ENCODE measurements at regions of chr3 and their contacts with region 1.

Region 1: DNA sequence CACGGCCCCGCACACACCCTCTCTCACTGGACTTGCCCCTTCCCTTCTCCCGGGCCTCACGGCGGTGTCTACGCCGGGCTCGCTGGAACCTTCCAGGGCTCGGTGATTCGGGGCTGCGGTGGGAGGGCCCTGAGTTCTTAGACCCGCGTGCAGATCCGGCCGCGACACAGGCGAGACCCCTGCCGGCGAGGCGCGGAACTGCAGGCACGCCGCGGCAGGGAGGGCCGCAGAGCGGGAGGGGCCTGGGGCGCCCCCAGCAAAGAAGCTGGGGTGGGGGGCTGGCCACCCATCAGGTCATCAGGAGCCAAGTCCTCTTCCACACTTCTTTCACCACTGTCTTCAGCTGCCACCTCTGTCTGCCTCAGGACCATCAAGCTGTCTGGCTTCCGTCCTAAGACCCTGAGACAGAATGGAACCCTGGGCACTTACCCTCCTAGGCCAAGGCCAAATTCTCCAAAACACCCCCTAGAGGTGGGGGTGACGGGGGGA is 164.5 kb downstream of the XXYLT1 start:
- DNase-seq: no peak
- ATAC-seq: peak; percentile 89
- H3K4me3 ChIP-seq: peak overlapping the region in 1 of 2 experiments; percentile 25; a peak in 1 of 4 replicates
- H3K27ac ChIP-seq: no peak overlapping the region
- H3K4me1 ChIP-seq: peaks cover 10 to 38% of the 10 kb centered on the region in 2 experiments
- H3K27me3 ChIP-seq: no peaks in the 10 kb centered on the region
- CTCF ChIP-seq: peak; percentile 87 to 97 (median 93)
- POLR2A ChIP-seq: no peak
- RAD21 ChIP-seq: peak; percentile 96

Region 2: GRCh38 chr3:194671900-194672808 is 434.3 kb before region 1 on chr3 and contains the start of gene LSG1:
- CTCF ChIA-PET with region 1: interaction called, 10 read pairs
- POLR2A ChIA-PET with region 1: no interaction called
- RAD21 ChIA-PET with region 1: no interaction called
- intact Hi-C with region 1: loop called (anchors 1 kb)
- DNase-seq: peak; percentile 95
- ATAC-seq: peak; percentile 93
- H3K4me3 ChIP-seq: peak within 1 kb of the TSS; percentile 89 to 95
- H3K27ac ChIP-seq: peak within 1 kb of the TSS; percentile 43
- H3K4me1 ChIP-seq: peaks cover 7 to 19% of the 10 kb centered on the region in 2 experiments; a peak in 3 of 4 replicates
- H3K27me3 ChIP-seq: no peaks in the 10 kb centered on the region; the same call in 1 of the 2 replicates
- CTCF ChIP-seq: no peak
- POLR2A ChIP-seq: peak; percentile 26
- RAD21 ChIP-seq: no peak
- total RNA-seq, gene LSG1: 39.7 TPM

Region 3: GRCh38 chr3:194871143-194871863 is 235.2 kb before region 1 on chr3:
- CTCF ChIA-PET with region 1: no interaction called
- POLR2A ChIA-PET with region 1: no interaction called
- RAD21 ChIA-PET with region 1: no interaction called
- intact Hi-C with region 1: loop called (anchors 10 kb)
- DNase-seq: peak; percentile 60
- ATAC-seq: peak; percentile 83
- H3K4me3 ChIP-seq: peak overlapping the region; percentile 13 to 42; a peak in 3 of 4 replicates
- H3K27ac ChIP-seq: peak overlapping the region; percentile 36
- H3K4me1 ChIP-seq: peaks cover 37 to 41% of the 10 kb centered on the region in 2 experiments
- H3K27me3 ChIP-seq: no peaks in the 10 kb centered on the region
- CTCF ChIP-seq: no peak
- POLR2A ChIP-seq: no peak
- RAD21 ChIP-seq: peak; percentile 41; the same call in 1 of the 2 replicates

Region 4: DNA sequence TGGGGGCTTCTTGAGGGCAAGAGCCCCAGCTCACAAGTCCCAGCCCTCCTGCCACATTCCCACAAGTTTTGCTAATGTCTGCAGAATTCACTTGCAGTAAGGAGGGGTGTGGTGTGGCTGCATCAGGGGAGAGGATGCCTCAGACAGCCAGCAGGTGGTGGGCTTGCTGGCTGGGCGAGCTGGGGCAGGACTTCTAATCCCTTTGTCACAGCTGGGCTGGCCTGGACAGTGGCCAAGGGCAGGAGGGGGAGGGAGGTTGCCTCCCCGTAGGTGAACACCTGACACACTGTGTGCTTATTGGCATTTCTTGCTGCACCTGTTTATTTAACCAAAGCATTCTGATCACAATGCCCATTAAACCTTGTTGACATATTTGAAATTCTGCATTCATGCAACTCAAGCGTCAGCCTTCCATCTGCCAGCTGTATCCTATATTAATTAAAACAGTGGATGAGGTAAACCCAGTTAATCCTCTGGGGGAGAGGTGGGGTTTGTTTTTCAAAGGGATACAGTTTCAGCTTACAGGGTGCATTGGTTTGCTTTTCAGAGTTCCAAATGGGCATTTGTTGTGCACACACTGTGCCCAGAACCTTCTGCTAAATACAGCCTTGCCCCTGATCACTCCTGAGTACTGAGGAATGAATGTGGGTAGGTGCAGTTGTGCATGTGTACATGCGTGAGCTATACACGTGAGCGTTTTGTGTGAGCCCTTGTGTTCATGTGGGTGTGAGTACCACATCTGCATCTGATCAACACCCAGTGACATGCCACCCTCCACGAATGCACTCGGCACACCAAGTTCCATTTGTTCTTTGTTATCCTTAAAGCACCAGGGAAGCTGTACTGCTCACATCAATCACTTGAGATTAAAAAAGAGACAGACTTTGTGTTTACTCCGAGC is 104.3 kb before region 1 on chr3:
- CTCF ChIA-PET with region 1: interaction called, 4 read pairs
- POLR2A ChIA-PET with region 1: no interaction called
- RAD21 ChIA-PET with region 1: no interaction called
- intact Hi-C with region 1: loop called (anchors 1 kb)
- DNase-seq: peak; percentile 37
- ATAC-seq: peak; percentile 93
- H3K4me3 ChIP-seq: no peak overlapping the region
- H3K27ac ChIP-seq: no peak overlapping the region
- H3K4me1 ChIP-seq: peaks cover 0 to 9% of the 10 kb centered on the region in 2 experiments; a peak in 1 of 4 replicates
- H3K27me3 ChIP-seq: peaks cover 34% of the 10 kb centered on the region; the same call in 1 of the 2 replicates
- CTCF ChIP-seq: peak; percentile 68 to 76 (median 71); a peak in 5 of 6 replicates
- POLR2A ChIP-seq: no peak
- RAD21 ChIP-seq: peak; percentile 84

Measured in HCT116 (cell line).